PC-9 (cell line): ENCODE measurements at regions of chr19 and their contacts with region 1.

Region 1: DNA sequence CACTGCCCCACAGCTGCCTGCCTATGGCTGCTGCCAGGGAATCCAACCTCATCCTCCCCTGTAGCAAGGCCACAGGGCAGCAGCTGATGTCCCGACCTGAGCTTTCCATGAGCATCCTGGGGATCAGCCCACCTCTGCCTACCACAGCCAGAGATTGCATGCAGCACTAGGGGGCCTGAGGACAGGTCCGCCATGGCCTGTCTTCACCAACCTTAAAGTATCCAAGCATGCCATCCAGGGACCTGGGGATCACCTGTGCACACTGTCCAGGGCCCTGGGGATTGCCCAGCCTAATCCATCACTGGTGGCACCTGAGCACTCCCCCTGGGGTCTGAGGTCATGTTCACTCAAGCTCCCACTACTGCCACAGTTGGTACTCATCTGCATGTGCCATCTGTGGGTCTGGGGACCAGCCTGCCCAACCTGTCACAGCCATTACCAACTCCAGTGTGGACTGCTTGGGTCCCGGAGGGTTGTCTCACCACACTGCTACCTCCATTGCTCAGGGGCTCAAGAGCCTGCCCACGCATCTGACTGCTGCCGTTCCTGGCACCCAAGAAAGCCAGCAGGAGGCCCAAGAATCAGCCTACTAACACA is 53.0 kb downstream of the KCTD15 start:
- DNase-seq: no peak
- H3K4me3 ChIP-seq: no peak overlapping the region
- H3K27ac ChIP-seq: no peak overlapping the region
- H3K4me1 ChIP-seq: no peaks in the 10 kb centered on the region
- H3K27me3 ChIP-seq: peaks cover 76% of the 10 kb centered on the region
- CTCF ChIP-seq: no peak

Region 2: GRCh38 chr19:33778089-33778791 is 71.4 kb before region 1 on chr19:
- CTCF ChIA-PET with region 1: no interaction called
- POLR2A ChIA-PET with region 1: no interaction called
- intact Hi-C with region 1: no loop called
- DNase-seq: peak in 1 of 2 experiments; percentile 80
- H3K4me3 ChIP-seq: no peak overlapping the region
- H3K27ac ChIP-seq: no peak overlapping the region
- H3K4me1 ChIP-seq: no peaks in the 10 kb centered on the region
- H3K27me3 ChIP-seq: peaks cover 54% of the 10 kb centered on the region
- CTCF ChIP-seq: peak; percentile 97

Region 3: DNA sequence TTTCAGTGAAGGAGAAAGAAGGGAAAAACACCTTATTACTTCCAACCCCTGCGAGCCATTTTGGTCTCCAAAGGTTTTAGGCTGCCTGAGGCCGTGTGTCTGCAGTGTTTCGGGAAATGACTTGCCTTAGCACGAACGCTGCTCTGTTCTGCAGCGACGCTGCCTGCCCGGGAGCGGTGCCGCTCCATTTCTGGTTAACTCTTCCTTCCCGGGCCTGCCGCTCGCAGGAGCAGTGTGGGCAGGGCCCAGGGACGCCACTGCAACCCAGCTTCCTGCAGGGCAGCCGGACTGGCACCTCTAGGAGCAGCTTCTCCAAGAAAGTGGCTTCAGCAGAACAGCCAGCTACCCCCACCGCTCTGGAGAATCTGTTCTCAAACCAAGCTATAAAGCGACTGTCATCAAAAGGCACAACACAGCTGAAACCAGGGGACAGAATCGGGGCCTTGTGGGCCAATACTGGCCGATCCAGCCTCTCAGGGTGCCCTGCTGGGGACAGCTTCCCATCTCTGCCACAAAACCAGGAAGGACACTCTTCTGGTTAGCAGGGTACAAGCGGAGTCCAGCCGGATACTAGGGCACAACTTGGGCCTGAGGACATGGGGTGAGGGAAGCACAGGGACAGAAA is 19.3 kb after region 1 on chr19:
- CTCF ChIA-PET with region 1: no interaction called
- POLR2A ChIA-PET with region 1: interaction called, 13 read pairs
- intact Hi-C with region 1: no loop called
- DNase-seq: no peak
- H3K4me3 ChIP-seq: no peak overlapping the region
- H3K27ac ChIP-seq: no peak overlapping the region
- H3K4me1 ChIP-seq: no peaks in the 10 kb centered on the region
- H3K27me3 ChIP-seq: peaks cover 61% of the 10 kb centered on the region
- CTCF ChIP-seq: no peak